ENCODE measurements at regions of chr12 and their contacts with region 1.

Region 1: GRCh38 chr12:66169221-66170170 is at the start of gene TMBIM4:
- DNase-seq: peak; percentile 64 to 94 (median 77)
- ATAC-seq: peak; percentile 81
- H3K4me3 ChIP-seq: peak within 1 kb of the TSS; percentile 88
- H3K4me3 Mint-ChIP-seq: peak within 1 kb of the TSS; percentile 93
- H3K27ac ChIP-seq: peak within 1 kb of the TSS; percentile 98
- H3K27ac Mint-ChIP-seq: peak within 1 kb of the TSS; percentile 93
- H3K4me1 ChIP-seq: peaks cover 17% of the 10 kb centered on the region
- H3K4me1 Mint-ChIP-seq: peaks cover 57% of the 10 kb centered on the region
- H3K27me3 ChIP-seq: no peaks in the 10 kb centered on the region
- H3K27me3 Mint-ChIP-seq: peaks cover 4% of the 10 kb centered on the region
- CTCF ChIP-seq: peak; percentile 57
- total RNA-seq, gene TMBIM4: 24.1 to 24.2 TPM

Region 2: GRCh38 chr12:65999564-66000280 is 169.8 kb before region 1 on chr12:
- CTCF ChIA-PET with region 1: no interaction called
- POLR2A ChIA-PET with region 1: no interaction called
- intact Hi-C with region 1: no loop called
- DNase-seq: no peak
- ATAC-seq: no peak
- H3K4me3 ChIP-seq: no peak overlapping the region
- H3K4me3 Mint-ChIP-seq: no peak overlapping the region
- H3K27ac ChIP-seq: no peak overlapping the region
- H3K27ac Mint-ChIP-seq: no peak overlapping the region
- H3K4me1 ChIP-seq: no peaks in the 10 kb centered on the region
- H3K4me1 Mint-ChIP-seq: no peaks in the 10 kb centered on the region
- H3K27me3 ChIP-seq: no peaks in the 10 kb centered on the region
- H3K27me3 Mint-ChIP-seq: no peaks in the 10 kb centered on the region
- CTCF ChIP-seq: no peak

Region 3: GRCh38 chr12:66014818-66015217 is 154.7 kb before region 1 on chr12:
- CTCF ChIA-PET with region 1: no interaction called
- POLR2A ChIA-PET with region 1: no interaction called
- intact Hi-C with region 1: no loop called
- DNase-seq: no peak
- ATAC-seq: no peak
- H3K4me3 ChIP-seq: no peak overlapping the region
- H3K4me3 Mint-ChIP-seq: no peak overlapping the region
- H3K27ac ChIP-seq: no peak overlapping the region
- H3K27ac Mint-ChIP-seq: no peak overlapping the region
- H3K4me1 ChIP-seq: no peaks in the 10 kb centered on the region
- H3K4me1 Mint-ChIP-seq: no peaks in the 10 kb centered on the region
- H3K27me3 ChIP-seq: peaks cover 0 to 4% of the 10 kb centered on the region in 2 experiments
- H3K27me3 Mint-ChIP-seq: peaks cover 30% of the 10 kb centered on the region
- CTCF ChIP-seq: no peak

Region 4: GRCh38 chr12:66130277-66131066 is 39.0 kb before region 1 on chr12 and contains the start of gene LLPH:
- CTCF ChIA-PET with region 1: interaction called, 19 read pairs
- POLR2A ChIA-PET with region 1: interaction called, 94 read pairs
- intact Hi-C with region 1: loop called (anchors 2 kb)
- DNase-seq: peak; percentile 78 to 94 (median 84)
- ATAC-seq: peak; percentile 90
- H3K4me3 ChIP-seq: peak within 1 kb of the TSS; percentile 96
- H3K4me3 Mint-ChIP-seq: peak within 1 kb of the TSS; percentile 95
- H3K27ac ChIP-seq: peak within 1 kb of the TSS; percentile 77 to 89
- H3K27ac Mint-ChIP-seq: peak within 1 kb of the TSS; percentile 96
- H3K4me1 ChIP-seq: peaks cover 13% of the 10 kb centered on the region
- H3K4me1 Mint-ChIP-seq: peaks cover 71% of the 10 kb centered on the region
- H3K27me3 ChIP-seq: no peaks in the 10 kb centered on the region
- H3K27me3 Mint-ChIP-seq: no peaks in the 10 kb centered on the region
- CTCF ChIP-seq: no peak
- total RNA-seq, gene LLPH: 27.3 to 31.0 TPM

Region 5: DNA sequence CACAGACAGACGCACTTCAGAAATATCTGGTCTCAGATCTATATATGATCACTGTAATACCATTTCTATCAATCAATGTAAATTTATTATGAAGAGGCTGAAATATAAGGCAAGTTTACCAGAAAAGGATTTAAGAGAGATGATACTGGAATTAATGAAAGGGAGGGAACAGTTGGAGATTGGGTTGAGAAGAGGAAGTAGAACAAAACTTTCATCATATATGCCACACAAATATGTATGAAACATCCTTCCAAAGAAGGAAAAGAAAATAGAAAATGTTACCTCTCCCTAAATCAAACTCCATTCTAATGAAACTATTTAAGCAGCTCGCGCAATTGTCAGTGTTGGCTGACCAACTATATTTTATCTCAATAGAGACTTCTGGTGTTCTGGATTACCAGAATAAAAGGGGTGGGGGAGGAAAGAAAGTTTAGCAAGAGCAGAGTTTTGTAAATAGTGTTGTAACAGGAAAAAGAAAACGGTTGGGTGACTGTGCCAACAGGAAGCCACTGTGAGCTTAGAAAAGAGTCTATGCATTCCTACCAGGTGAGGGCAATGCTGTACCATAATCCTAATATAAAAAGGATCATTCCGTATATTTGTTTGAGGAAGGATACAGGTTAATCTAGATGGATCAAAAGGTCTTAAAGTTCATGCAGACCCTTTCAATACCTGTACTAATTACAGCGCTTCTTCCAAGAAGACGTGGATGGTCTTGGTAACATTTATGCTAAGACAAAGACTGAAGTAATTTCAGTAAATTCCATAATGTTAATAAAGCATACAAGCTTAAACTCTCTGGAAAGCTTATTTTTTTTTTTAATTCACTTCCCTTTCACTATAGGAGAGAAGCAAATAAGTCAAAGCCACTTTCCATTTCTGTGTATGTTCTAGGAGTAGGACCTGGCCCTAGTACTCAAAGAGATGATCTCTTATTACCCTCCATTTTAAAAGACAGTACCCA is 24.4 kb before region 1 on chr12:
- CTCF ChIA-PET with region 1: interaction called, 7 read pairs
- POLR2A ChIA-PET with region 1: interaction called, 17 read pairs
- intact Hi-C with region 1: loop called in 1 of 2 experiments (anchors 2 kb)
- DNase-seq: peak in 3 of 14 experiments; percentile 11 to 52 (median 52)
- ATAC-seq: peak; percentile 73
- H3K4me3 ChIP-seq: no peak overlapping the region
- H3K4me3 Mint-ChIP-seq: no peak overlapping the region
- H3K27ac ChIP-seq: no peak overlapping the region
- H3K27ac Mint-ChIP-seq: peak overlapping the region; percentile 50
- H3K4me1 ChIP-seq: no peaks in the 10 kb centered on the region
- H3K4me1 Mint-ChIP-seq: peaks cover 34% of the 10 kb centered on the region
- H3K27me3 ChIP-seq: no peaks in the 10 kb centered on the region
- H3K27me3 Mint-ChIP-seq: no peaks in the 10 kb centered on the region
- CTCF ChIP-seq: peak; percentile 36

Region 6: GRCh38 chr12:66156654-66157053 is 12.8 kb before region 1 on chr12:
- CTCF ChIA-PET with region 1: no interaction called
- POLR2A ChIA-PET with region 1: interaction called, 31 read pairs
- intact Hi-C with region 1: no loop called
- DNase-seq: no peak
- ATAC-seq: no peak
- H3K4me3 ChIP-seq: no peak overlapping the region
- H3K4me3 Mint-ChIP-seq: no peak overlapping the region
- H3K27ac ChIP-seq: no peak overlapping the region
- H3K27ac Mint-ChIP-seq: no peak overlapping the region
- H3K4me1 ChIP-seq: peaks cover 4% of the 10 kb centered on the region
- H3K4me1 Mint-ChIP-seq: peaks cover 46% of the 10 kb centered on the region
- H3K27me3 ChIP-seq: no peaks in the 10 kb centered on the region
- H3K27me3 Mint-ChIP-seq: no peaks in the 10 kb centered on the region
- CTCF ChIP-seq: no peak

Region 7: GRCh38 chr12:66235626-66236281 is 66.3 kb after region 1 on chr12:
- CTCF ChIA-PET with region 1: no interaction called
- POLR2A ChIA-PET with region 1: interaction called, 10 read pairs
- intact Hi-C with region 1: no loop called
- DNase-seq: no peak
- ATAC-seq: no peak
- H3K4me3 ChIP-seq: peak overlapping the region; percentile 23
- H3K4me3 Mint-ChIP-seq: peak overlapping the region; percentile 14
- H3K27ac ChIP-seq: no peak overlapping the region
- H3K27ac Mint-ChIP-seq: no peak overlapping the region
- H3K4me1 ChIP-seq: peaks cover 6% of the 10 kb centered on the region
- H3K4me1 Mint-ChIP-seq: peaks cover 9% of the 10 kb centered on the region
- H3K27me3 ChIP-seq: peaks cover 21 to 28% of the 10 kb centered on the region in 2 experiments
- H3K27me3 Mint-ChIP-seq: peaks cover 47% of the 10 kb centered on the region
- CTCF ChIP-seq: no peak

Region 8: GRCh38 chr12:66288121-66288520 is 118.6 kb after region 1 on chr12:
- CTCF ChIA-PET with region 1: interaction called, 3 read pairs
- POLR2A ChIA-PET with region 1: interaction called, 12 read pairs
- intact Hi-C with region 1: loop called in 1 of 2 experiments (anchors 5 kb)
- DNase-seq: peak; percentile 28 to 93 (median 56)
- ATAC-seq: peak; percentile 97
- H3K4me3 ChIP-seq: peak overlapping the region; percentile 24
- H3K4me3 Mint-ChIP-seq: peak overlapping the region; percentile 55
- H3K27ac ChIP-seq: peak overlapping the region in 1 of 2 donors; percentile 25
- H3K27ac Mint-ChIP-seq: peak overlapping the region; percentile 84
- H3K4me1 ChIP-seq: peaks cover 79% of the 10 kb centered on the region
- H3K4me1 Mint-ChIP-seq: peaks cover 87% of the 10 kb centered on the region
- H3K27me3 ChIP-seq: no peaks in the 10 kb centered on the region
- H3K27me3 Mint-ChIP-seq: no peaks in the 10 kb centered on the region
- CTCF ChIP-seq: no peak

Region 9: DNA sequence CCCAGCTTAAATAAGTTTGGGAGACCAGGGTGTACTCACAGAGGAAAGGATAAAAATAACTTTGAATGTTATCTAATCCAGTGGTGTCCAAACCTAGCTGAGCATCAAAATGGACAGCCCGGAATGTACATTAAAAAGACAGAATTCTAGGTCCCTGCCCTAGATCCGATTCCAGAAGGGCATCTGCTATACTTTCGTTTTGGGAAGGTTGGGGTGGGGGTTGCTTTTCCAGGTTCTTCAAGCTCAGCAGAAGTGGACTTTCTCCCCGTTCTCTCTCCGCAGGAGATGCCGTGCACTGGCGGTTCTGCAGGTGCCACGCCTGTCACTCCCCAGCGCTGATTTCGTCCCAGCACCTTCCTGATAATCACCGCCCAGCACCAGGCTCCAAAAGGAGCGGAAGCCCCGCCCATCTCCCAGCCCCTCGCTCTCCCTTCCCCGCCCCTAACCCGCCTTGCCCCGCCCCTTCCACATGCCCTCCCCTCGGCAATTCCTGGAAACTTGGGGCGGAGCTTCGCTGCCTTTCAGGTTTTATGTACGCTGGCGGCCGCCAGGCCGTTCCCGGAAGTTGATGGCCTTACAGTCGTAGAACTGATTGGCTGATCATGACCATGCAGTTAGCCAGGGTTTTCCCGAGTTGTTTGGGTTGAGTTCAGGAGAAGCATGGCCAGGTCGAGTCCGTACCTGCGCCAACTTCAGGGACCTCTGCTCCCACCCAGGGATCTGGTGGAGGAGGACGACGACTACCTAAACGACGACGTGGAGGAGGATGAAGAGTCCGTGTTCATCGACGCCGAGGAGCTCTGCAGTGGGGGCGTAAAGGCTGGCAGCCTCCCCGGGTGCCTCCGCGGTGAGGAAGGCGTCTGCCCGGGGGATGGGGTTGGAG is 132.7 kb after region 1 on chr12 and contains the start of gene HELB:
- CTCF ChIA-PET with region 1: no interaction called
- POLR2A ChIA-PET with region 1: interaction called, 24 read pairs
- intact Hi-C with region 1: loop called (anchors 5 to 10 kb)
- DNase-seq: peak; percentile 89 to 100 (median 96)
- ATAC-seq: peak; percentile 76
- H3K4me3 ChIP-seq: peak within 1 kb of the TSS; percentile 87
- H3K4me3 Mint-ChIP-seq: peak within 1 kb of the TSS; percentile 97
- H3K27ac ChIP-seq: peak within 1 kb of the TSS; percentile 86 to 89
- H3K27ac Mint-ChIP-seq: peak within 1 kb of the TSS; percentile 87
- H3K4me1 ChIP-seq: peaks cover 17% of the 10 kb centered on the region
- H3K4me1 Mint-ChIP-seq: peaks cover 59% of the 10 kb centered on the region
- H3K27me3 ChIP-seq: no peaks in the 10 kb centered on the region
- H3K27me3 Mint-ChIP-seq: no peaks in the 10 kb centered on the region
- CTCF ChIP-seq: no peak
- total RNA-seq, gene HELB: 33.8 to 35.8 TPM

Measured in CD4-positive, alpha-beta T cell (primary cell).